ENCODE measurements at regions of chr11 and their contacts with region 1.

Region 1: DNA sequence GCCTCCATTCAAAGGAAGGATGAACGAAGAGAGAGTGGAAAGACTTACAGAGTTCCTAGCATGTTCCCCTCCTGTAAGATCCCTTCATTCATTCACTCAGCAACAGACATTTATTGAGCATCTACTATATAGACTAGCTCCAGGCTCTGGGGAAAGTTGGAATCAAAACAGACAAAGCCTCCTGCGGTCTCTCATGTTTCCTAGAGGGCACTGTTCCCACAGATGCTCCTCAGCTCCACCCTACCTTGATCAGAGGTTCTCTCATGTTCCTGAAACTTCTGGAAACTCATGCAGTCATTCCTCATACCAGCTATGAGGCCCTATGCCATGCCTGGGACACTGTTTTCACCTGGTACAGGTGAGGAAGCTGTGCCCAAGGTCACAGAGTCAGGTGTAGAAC is 11.1 kb downstream of the ALX4 start:
- DNase-seq: no peak

Region 2: GRCh38 chr11:44277196-44278090 is 21.4 kb before region 1 on chr11:
- intact Hi-C with region 1: loop called in 1 of 2 experiments (anchors 1 kb)
- DNase-seq: peak; percentile 43

Region 3: GRCh38 chr11:44443836-44444769 is 145.2 kb after region 1 on chr11:
- intact Hi-C with region 1: no loop called
- DNase-seq: no peak

Measured in posterior vena cava (tissue), 2 donors.